Activated B cell treated with CpG ODN at 0.5 μM for 24 hours (primary cell): ENCODE measurements at regions of chr1 and their contacts with region 1.

Region 1: DNA sequence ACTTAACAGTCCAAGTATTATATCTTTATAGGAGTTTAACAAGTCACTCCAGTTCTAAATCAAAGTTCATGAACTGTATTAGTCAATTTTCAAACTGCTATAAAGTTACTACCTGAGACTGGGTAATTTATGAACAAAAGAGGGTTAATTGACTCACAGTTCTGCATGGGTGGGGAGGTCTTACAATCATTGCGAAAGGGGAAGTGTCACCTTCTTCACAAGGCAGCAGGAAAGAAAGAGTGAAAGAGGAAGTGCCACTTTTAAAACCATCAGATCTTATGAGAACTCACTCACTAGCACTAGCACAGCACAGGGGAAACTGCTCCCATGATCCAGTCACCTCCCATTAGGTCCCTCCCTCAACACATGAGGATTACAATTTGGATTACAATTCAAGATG is 70.0 kb downstream of the CLCA4 start:
- DNase-seq: no peak
- ATAC-seq: peak; percentile 97
- H3K4me3 Mint-ChIP-seq: peak overlapping the region; percentile 5
- H3K27ac Mint-ChIP-seq: peak overlapping the region; percentile 89
- H3K4me1 Mint-ChIP-seq: peaks cover 39% of the 10 kb centered on the region
- H3K27me3 Mint-ChIP-seq: no peaks in the 10 kb centered on the region
- CTCF ChIP-seq: no peak

Region 2: DNA sequence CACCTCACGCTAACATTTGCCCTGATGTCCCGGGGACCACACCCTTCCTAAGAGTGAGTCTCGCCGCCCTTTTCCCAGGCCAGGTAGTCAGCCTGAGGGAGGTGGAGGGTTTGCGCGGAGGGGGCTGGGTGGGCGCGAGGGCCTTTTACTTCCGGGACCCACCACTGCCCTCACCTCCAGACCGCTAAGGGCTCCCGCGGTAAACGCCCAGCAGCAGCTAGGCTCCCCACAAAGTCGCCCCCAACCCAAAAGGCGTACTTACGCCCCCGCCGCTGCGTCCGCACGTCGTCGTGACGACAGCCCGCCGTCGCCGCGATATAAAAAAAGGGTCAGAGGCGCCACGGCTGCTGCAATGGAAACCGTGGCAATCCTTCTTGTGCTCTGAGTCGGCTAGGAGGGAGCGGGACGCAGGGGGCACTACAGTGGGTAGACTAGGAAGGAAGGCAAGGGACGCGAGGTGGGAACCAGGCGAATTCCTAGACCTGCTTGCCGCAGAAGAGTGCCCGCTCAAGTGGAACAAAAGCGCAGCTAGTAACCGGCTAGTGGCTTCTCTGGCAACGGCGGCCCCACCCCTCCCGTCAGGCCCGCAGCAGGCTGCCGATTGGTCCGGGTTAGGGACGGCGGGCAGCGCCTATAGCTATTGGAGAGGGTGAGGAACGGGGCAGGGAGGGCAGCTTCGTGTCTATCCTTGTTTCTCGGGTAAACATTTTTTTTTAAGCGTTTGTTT is 220.9 kb before region 1 on chr1 and contains the start of gene ODF2L:
- CTCF ChIA-PET with region 1: interaction called, 3 read pairs
- POLR2A ChIA-PET with region 1: no interaction called
- intact Hi-C with region 1: loop called (anchors 1 kb)
- DNase-seq: peak; percentile 78
- ATAC-seq: peak; percentile 99
- H3K4me3 Mint-ChIP-seq: peak within 1 kb of the TSS; percentile 98
- H3K27ac Mint-ChIP-seq: peak within 1 kb of the TSS; percentile 95
- H3K4me1 Mint-ChIP-seq: peaks cover 45% of the 10 kb centered on the region
- H3K27me3 Mint-ChIP-seq: no peaks in the 10 kb centered on the region
- CTCF ChIP-seq: no peak
- total RNA-seq, gene ODF2L: 28.2 and 36.1 TPM in 2 replicates

Region 3: DNA sequence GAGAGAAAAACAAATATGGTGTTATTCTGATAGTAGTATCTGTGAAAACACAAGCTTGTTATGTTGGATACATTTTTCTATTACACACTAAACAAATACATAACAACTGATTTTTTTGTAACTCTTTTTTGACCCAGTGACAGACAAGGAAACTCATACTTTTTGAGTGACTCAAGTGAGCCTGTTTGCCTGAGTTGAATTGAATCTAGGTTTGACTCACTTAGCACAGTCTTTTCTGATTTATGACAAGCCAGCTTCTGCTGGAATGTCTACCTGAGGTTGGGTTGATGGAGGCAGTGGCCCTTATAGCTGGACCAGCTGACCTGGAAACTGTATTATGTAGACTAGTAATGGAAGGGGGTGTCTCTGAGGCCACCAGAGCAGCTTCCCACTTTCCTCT is 74.2 kb before region 1 on chr1:
- CTCF ChIA-PET with region 1: no interaction called
- POLR2A ChIA-PET with region 1: no interaction called
- intact Hi-C with region 1: loop called (anchors 1 kb)
- DNase-seq: no peak
- ATAC-seq: no peak
- H3K4me3 Mint-ChIP-seq: no peak overlapping the region
- H3K27ac Mint-ChIP-seq: no peak overlapping the region
- H3K4me1 Mint-ChIP-seq: no peaks in the 10 kb centered on the region
- H3K27me3 Mint-ChIP-seq: peaks cover 14% of the 10 kb centered on the region
- CTCF ChIP-seq: no peak

Region 4: GRCh38 chr1:86567878-86568277 is 49.0 kb before region 1 on chr1:
- CTCF ChIA-PET with region 1: no interaction called
- POLR2A ChIA-PET with region 1: no interaction called
- intact Hi-C with region 1: no loop called
- DNase-seq: no peak
- ATAC-seq: no peak
- H3K4me3 Mint-ChIP-seq: no peak overlapping the region
- H3K27ac Mint-ChIP-seq: no peak overlapping the region
- H3K4me1 Mint-ChIP-seq: no peaks in the 10 kb centered on the region
- H3K27me3 Mint-ChIP-seq: peaks cover 8% of the 10 kb centered on the region
- CTCF ChIP-seq: no peak

Region 5: GRCh38 chr1:86596741-86597290 is 20.1 kb before region 1 on chr1:
- CTCF ChIA-PET with region 1: no interaction called
- POLR2A ChIA-PET with region 1: interaction called, 4 read pairs
- intact Hi-C with region 1: loop called (anchors 1 kb)
- DNase-seq: no peak
- ATAC-seq: no peak
- H3K4me3 Mint-ChIP-seq: no peak overlapping the region
- H3K27ac Mint-ChIP-seq: no peak overlapping the region
- H3K4me1 Mint-ChIP-seq: no peaks in the 10 kb centered on the region
- H3K27me3 Mint-ChIP-seq: peaks cover 7% of the 10 kb centered on the region
- CTCF ChIP-seq: no peak

Region 6: DNA sequence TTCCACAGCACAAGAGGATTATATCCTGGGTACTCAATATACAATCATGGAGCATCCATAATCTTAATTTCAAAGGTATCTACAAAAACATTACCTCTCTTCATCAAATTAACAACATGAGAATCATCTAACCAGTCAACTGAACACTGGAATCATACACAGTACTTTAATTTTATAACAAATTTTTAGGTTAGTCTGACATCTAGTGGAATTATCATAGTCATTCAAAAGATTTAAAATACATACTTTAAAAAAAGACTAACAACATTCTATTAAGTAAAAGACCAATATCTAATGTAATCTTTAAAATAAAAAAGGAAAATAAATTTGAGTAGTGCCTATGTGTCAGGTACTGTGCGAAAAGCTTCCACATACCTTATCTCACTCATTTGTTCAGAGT is 70.7 kb after region 1 on chr1:
- CTCF ChIA-PET with region 1: interaction called, 3 read pairs
- POLR2A ChIA-PET with region 1: no interaction called
- intact Hi-C with region 1: loop called (anchors 5 kb)
- DNase-seq: no peak
- ATAC-seq: peak; percentile 34
- H3K4me3 Mint-ChIP-seq: no peak overlapping the region
- H3K27ac Mint-ChIP-seq: no peak overlapping the region
- H3K4me1 Mint-ChIP-seq: no peaks in the 10 kb centered on the region
- H3K27me3 Mint-ChIP-seq: no peaks in the 10 kb centered on the region
- CTCF ChIP-seq: no peak

Region 7: GRCh38 chr1:86866665-86867064 is 249.8 kb after region 1 on chr1:
- CTCF ChIA-PET with region 1: no interaction called
- POLR2A ChIA-PET with region 1: no interaction called
- intact Hi-C with region 1: loop called (anchors 2 kb)
- DNase-seq: no peak
- ATAC-seq: peak; percentile 5
- H3K4me3 Mint-ChIP-seq: peak overlapping the region; percentile 65
- H3K27ac Mint-ChIP-seq: peak overlapping the region; percentile 87
- H3K4me1 Mint-ChIP-seq: peaks cover 44% of the 10 kb centered on the region
- H3K27me3 Mint-ChIP-seq: no peaks in the 10 kb centered on the region
- CTCF ChIP-seq: no peak

Region 8: DNA sequence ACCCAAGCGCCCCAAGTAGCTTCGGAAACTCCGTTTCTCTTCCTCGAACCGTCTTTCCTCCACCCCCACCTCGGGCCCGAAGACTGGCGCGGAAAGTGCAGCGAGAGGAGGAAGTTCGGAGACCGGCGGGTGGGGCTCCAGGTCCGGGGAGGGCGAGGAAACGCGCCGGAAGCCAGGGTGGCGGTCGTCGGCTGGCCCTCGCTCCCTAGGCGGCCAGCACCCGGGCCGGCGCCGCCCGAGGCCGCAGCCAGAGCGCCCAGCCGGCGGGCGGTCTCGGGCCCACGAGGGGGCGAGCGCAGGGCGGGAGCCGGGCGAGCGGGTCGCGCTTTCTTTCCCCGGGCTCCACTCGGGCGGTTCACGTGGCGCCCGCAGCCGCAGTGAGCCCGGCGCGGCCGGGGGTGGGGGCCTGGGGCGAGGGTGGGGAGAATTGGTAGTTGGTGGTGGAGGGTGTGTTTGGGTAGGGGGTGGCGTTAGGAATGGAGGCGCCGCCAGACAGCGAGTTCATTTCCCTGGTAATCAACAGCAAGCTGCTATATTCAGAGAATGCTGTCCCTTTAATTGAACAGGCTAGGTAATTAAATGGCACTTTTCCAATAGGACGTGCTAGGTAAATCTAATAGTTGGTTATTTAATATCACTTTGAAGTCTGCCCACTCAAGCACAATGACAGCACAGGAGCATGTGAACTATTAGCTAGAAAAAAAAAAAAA is 718.5 kb after region 1 on chr1:
- CTCF ChIA-PET with region 1: no interaction called
- POLR2A ChIA-PET with region 1: no interaction called
- intact Hi-C with region 1: loop called (anchors 2 kb)
- DNase-seq: peak; percentile 69
- ATAC-seq: peak; percentile 65
- H3K4me3 Mint-ChIP-seq: peak overlapping the region; percentile 89
- H3K27ac Mint-ChIP-seq: peak overlapping the region; percentile 93
- H3K4me1 Mint-ChIP-seq: peaks cover 62% of the 10 kb centered on the region
- H3K27me3 Mint-ChIP-seq: no peaks in the 10 kb centered on the region
- CTCF ChIP-seq: no peak